Ascending aorta (tissue), 2 donors: ENCODE measurements at regions of chr11 and their contacts with region 1.

Region 1: DNA sequence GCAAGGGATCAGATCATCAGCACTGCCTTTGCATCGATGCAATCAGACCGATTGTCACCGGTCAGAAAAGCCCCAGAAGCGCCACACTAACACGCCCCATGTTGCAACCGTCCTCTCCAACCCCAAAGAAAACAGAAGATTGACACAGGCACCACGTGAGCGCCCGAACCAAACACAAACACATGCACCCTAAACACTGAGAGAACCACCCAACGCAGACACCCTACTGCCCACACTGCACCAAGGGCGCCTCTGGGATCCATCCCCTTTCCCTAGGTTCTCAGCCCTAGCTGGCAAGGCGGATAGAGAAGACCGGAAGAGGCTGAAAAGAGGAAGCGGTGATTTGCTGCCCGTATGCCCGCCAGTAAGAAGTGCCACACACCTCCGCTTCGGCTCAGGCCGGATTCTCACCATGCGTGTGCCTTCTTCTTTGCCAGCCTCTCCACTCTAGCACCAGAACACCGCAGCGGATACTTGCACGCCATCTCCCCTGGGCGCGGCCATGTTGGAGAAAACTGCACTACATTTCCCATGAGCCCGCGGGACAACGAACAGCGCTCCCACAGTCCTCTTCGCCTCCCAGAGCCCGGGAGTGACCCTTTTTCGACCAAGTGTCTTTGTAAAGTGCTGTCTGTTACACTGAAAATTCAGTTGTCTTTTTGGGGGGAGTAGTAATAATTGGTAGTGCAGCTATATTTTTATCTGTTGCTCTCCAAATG is at the start of gene ALKBH8:
- DNase-seq: peak in 1 of 2 donors; percentile 89
- H3K4me3 ChIP-seq: peak within 1 kb of the TSS; percentile 80 to 90
- H3K27ac ChIP-seq: peak within 1 kb of the TSS; percentile 68 to 73
- H3K4me1 ChIP-seq: peaks cover 5 to 7% of the 10 kb centered on the region in 2 donors
- H3K27me3 ChIP-seq: no peaks in the 10 kb centered on the region
- CTCF ChIP-seq: peak in 1 of 3 experiments; percentile 3
- total RNA-seq, gene ALKBH8: 0.32 TPM

Region 2: DNA sequence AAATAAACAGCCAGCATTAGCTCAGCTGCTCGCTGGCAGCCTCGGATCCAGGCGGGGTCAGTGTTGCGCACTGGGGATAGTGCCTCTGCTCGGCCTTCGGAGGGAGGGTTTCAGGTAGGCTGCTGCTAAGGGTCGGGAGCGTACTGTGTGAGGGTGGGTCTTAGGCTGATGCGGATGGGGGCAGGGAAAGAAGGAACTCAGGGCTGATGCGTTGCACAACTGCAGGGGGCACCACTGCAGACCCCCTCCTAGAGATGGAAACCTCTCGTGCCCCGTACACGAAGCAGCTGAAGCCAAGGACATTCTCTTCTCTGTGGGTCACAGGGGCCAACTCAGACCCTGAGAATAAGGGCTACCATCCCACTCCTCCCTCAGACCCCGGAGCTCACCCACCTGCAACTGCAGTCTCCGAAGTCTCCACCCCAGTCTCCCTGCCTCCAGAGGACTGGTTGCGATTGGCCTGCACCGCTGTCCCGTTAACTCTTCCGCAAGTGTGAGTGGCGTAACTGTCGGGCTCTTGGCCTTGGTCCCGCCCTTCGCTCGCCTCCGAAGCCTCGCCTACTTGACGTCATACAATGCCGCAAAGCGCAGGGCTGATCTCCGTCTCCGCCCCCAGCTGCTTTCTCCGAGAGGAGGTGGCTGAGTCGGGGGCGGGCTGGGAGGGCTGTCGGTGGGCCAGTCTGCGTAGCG is 1488.3 kb before region 1 on chr11 and contains the start of gene KBTBD3:
- intact Hi-C with region 1: loop called (anchors 10 kb)
- DNase-seq: peak; percentile 96 to 99
- H3K4me3 ChIP-seq: peak within 1 kb of the TSS; percentile 87 to 98
- H3K27ac ChIP-seq: peak within 1 kb of the TSS; percentile 97 to 99
- H3K4me1 ChIP-seq: peaks cover 0 to 17% of the 10 kb centered on the region in 2 donors
- H3K27me3 ChIP-seq: no peaks in the 10 kb centered on the region
- CTCF ChIP-seq: peak in 1 of 3 experiments; percentile 43
- total RNA-seq, gene KBTBD3: not detected

Region 3: GRCh38 chr11:107619926-107620325 is 54.5 kb after region 1 on chr11:
- intact Hi-C with region 1: no loop called
- DNase-seq: no peak
- H3K4me3 ChIP-seq: no peak overlapping the region
- H3K27ac ChIP-seq: no peak overlapping the region
- H3K4me1 ChIP-seq: no peaks in the 10 kb centered on the region
- H3K27me3 ChIP-seq: no peaks in the 10 kb centered on the region
- CTCF ChIP-seq: no peak

Region 4: DNA sequence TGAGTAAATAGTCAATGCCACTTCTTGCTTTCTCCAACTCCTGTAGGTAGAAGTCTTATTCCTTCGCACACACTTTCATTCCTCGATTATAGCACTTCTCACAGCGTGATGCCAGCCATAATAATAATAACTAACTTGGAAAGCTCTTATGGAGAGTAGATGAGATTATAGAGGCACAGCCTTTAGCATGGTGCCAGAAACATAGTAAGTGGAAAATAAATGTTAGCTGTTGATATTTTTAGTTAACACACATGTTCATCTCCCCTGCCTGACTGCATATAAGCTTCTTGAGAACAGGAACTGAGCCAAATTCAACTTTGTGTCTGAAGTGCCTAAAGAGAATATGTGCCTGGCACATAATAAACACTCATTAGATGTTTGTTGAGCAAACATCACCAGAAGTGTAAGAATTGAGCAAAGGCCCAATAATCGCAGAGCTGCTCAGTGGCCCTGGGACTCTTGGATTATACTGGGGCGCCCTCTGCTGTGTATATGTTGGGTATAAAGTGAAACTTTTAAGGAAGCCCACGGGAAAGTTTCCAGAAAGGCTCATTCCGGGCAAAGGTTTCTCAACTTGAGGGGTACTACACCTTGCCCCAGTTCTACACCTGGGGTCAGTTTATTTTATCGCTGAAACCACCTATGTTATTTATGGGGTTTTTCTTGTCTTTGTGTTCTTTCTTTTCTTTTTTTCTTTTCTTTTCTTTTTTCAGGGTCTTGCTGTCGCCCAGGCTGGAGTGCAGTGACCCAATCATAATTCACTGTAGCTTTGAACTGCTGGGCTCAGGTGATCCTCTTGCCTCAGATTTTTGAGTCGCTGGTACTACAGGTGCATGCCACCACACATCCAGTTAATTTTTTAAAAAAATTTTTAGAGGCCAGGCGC is 124.2 kb after region 1 on chr11:
- intact Hi-C with region 1: loop called (anchors 2 kb)
- DNase-seq: peak in 1 of 2 donors; percentile 83
- H3K4me3 ChIP-seq: peak overlapping the region in 1 of 2 donors; percentile 49
- H3K27ac ChIP-seq: no peak overlapping the region
- H3K4me1 ChIP-seq: peaks cover 0 to 13% of the 10 kb centered on the region in 2 donors
- H3K27me3 ChIP-seq: no peaks in the 10 kb centered on the region
- CTCF ChIP-seq: peak; percentile 50 to 67 (median 63)

Region 5: DNA sequence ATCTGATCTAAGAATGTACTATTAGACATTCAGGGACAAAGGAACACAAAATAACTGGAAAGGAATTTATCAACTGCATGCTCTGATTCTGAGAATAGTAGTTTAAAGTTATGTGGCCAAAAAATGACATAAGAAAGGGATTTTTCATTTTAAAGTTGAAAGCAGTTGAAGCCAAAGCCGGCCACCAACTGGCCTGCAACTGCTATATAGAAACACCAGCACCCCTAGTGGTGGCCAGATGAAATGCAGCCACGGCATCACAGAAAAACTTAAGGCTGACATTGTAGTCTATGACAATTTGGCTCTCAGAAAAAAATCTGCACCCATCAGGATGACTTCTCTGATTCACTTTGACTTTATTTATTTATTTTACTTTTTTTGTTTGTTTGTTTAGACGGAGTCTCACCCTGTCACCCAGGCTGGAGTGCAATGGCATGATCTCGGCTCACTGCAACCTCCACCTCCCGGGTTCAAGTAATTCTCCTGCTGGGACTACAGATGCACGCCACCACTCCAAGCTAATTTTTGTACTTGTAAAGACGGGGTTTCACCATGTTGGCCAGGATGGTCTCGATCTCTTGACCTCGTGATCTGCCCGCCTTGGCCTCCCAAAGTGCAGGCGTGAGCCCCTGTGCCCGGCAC is 234.0 kb after region 1 on chr11:
- intact Hi-C with region 1: loop called (anchors 10 kb)
- DNase-seq: peak; percentile 30 to 91
- H3K4me3 ChIP-seq: no peak overlapping the region
- H3K27ac ChIP-seq: peak overlapping the region; percentile 67 to 86
- H3K4me1 ChIP-seq: peaks cover 4 to 10% of the 10 kb centered on the region in 2 donors
- H3K27me3 ChIP-seq: no peaks in the 10 kb centered on the region
- CTCF ChIP-seq: peak; percentile 59 to 95 (median 94)

Region 6: DNA sequence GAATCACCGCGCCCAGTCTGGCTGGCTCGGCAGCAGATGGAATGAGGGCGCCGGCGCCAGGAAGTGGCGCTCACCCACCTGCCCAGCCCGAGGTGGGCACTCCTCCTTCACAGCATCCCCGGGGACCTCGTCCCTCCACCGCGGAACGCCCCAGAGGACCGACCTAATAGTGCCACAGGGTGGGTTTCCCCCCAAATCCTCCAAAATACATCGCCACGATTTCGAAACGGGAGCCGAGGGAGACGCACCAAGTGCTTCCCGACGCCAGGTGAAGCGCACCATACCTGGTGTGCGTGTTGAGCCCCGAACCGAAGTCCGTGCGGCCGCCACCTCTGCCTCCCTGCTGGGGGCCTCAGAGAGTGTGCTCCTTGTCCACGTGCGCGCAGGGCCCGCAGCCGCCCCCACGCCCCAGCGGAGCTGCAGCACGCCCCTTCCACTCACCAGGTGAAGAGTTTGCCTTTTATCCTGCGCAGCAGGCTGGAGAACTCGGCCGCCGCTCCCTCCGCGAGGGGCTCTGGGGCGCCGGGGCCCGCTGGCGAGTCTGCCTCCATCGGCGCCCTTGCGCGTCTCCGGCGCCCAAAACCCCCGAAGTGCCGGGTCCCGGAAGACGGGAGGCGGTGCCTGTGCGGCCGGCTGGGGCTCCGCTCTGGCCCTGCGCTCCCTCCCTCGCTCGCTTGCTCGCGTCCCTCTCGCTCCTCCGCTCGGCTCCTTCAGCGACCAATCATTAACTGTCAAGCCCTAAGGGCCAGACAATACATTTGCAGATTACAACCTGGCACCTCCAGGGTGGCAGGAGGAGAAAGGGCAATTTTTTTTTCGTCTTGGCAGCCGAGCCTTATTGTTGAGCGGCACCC is 293.1 kb after region 1 on chr11 and contains the start of gene SLC35F2:
- intact Hi-C with region 1: loop called (anchors 5 kb)
- DNase-seq: peak in 1 of 2 donors; percentile 74
- H3K4me3 ChIP-seq: peak within 1 kb of the TSS; percentile 65 to 84
- H3K27ac ChIP-seq: peak within 1 kb of the TSS; percentile 66 to 88
- H3K4me1 ChIP-seq: no peaks in the 10 kb centered on the region
- H3K27me3 ChIP-seq: no peaks in the 10 kb centered on the region
- CTCF ChIP-seq: no peak
- total RNA-seq, gene SLC35F2: 5.4 TPM

Region 7: GRCh38 chr11:107898270-107898669 is 332.9 kb after region 1 on chr11:
- intact Hi-C with region 1: loop called (anchors 5 kb)
- DNase-seq: no peak
- H3K4me3 ChIP-seq: no peak overlapping the region
- H3K27ac ChIP-seq: no peak overlapping the region
- H3K4me1 ChIP-seq: no peaks in the 10 kb centered on the region
- H3K27me3 ChIP-seq: no peaks in the 10 kb centered on the region
- CTCF ChIP-seq: peak; percentile 48 to 62 (median 58)